ENCODE measurements at regions of chr6 and their contacts with region 1.

Region 1: GRCh38 chr6:24991810-24992467 is 56.2 kb upstream of the RIPOR2 start:
- DNase-seq: peak; percentile 52 to 90 (median 71)
- ATAC-seq: peak; percentile 86
- H3K4me3 ChIP-seq: no peak overlapping the region
- H3K4me3 Mint-ChIP-seq: peak overlapping the region; percentile 46
- H3K27ac ChIP-seq: peak overlapping the region; percentile 31 to 66
- H3K27ac Mint-ChIP-seq: peak overlapping the region; percentile 84
- H3K4me1 ChIP-seq: peaks cover 36% of the 10 kb centered on the region
- H3K4me1 Mint-ChIP-seq: peaks cover 83% of the 10 kb centered on the region
- H3K27me3 ChIP-seq: no peaks in the 10 kb centered on the region
- H3K27me3 Mint-ChIP-seq: no peaks in the 10 kb centered on the region
- CTCF ChIP-seq: peak; percentile 85

Region 2: GRCh38 chr6:24126586-24127192 is 865.2 kb before region 1 on chr6:
- CTCF ChIA-PET with region 1: no interaction called
- POLR2A ChIA-PET with region 1: no interaction called
- intact Hi-C with region 1: no loop called
- DNase-seq: peak in 4 of 14 experiments; percentile 6 to 30 (median 15)
- ATAC-seq: no peak
- H3K4me3 ChIP-seq: no peak overlapping the region
- H3K4me3 Mint-ChIP-seq: no peak overlapping the region
- H3K27ac ChIP-seq: no peak overlapping the region
- H3K27ac Mint-ChIP-seq: no peak overlapping the region
- H3K4me1 ChIP-seq: no peaks in the 10 kb centered on the region
- H3K4me1 Mint-ChIP-seq: no peaks in the 10 kb centered on the region
- H3K27me3 ChIP-seq: peaks cover 5 to 20% of the 10 kb centered on the region in 2 experiments
- H3K27me3 Mint-ChIP-seq: peaks cover 51% of the 10 kb centered on the region
- CTCF ChIP-seq: no peak

Region 3: GRCh38 chr6:24855395-24856245 is 136.3 kb before region 1 on chr6:
- CTCF ChIA-PET with region 1: interaction called, 67 read pairs
- POLR2A ChIA-PET with region 1: interaction called, 58 read pairs
- intact Hi-C with region 1: loop called (anchors 1 kb)
- DNase-seq: peak; percentile 49 to 90 (median 61)
- ATAC-seq: peak; percentile 66
- H3K4me3 ChIP-seq: no peak overlapping the region
- H3K4me3 Mint-ChIP-seq: peak overlapping the region; percentile 17
- H3K27ac ChIP-seq: peak overlapping the region; percentile 35 to 61
- H3K27ac Mint-ChIP-seq: peak overlapping the region; percentile 93
- H3K4me1 ChIP-seq: peaks cover 51% of the 10 kb centered on the region
- H3K4me1 Mint-ChIP-seq: peaks cover 67% of the 10 kb centered on the region
- H3K27me3 ChIP-seq: no peaks in the 10 kb centered on the region
- H3K27me3 Mint-ChIP-seq: no peaks in the 10 kb centered on the region
- CTCF ChIP-seq: peak; percentile 79

Region 4: GRCh38 chr6:24888715-24889370 is 103.1 kb before region 1 on chr6:
- CTCF ChIA-PET with region 1: interaction called, 17 read pairs
- POLR2A ChIA-PET with region 1: interaction called, 5 read pairs
- intact Hi-C with region 1: no loop called
- DNase-seq: no peak
- ATAC-seq: peak; percentile 62
- H3K4me3 ChIP-seq: no peak overlapping the region
- H3K4me3 Mint-ChIP-seq: peak overlapping the region; percentile 8
- H3K27ac ChIP-seq: peak overlapping the region in 1 of 2 donors; percentile 30
- H3K27ac Mint-ChIP-seq: peak overlapping the region; percentile 97
- H3K4me1 ChIP-seq: peaks cover 53% of the 10 kb centered on the region
- H3K4me1 Mint-ChIP-seq: peaks cover 93% of the 10 kb centered on the region
- H3K27me3 ChIP-seq: no peaks in the 10 kb centered on the region
- H3K27me3 Mint-ChIP-seq: no peaks in the 10 kb centered on the region
- CTCF ChIP-seq: no peak

Region 5: DNA sequence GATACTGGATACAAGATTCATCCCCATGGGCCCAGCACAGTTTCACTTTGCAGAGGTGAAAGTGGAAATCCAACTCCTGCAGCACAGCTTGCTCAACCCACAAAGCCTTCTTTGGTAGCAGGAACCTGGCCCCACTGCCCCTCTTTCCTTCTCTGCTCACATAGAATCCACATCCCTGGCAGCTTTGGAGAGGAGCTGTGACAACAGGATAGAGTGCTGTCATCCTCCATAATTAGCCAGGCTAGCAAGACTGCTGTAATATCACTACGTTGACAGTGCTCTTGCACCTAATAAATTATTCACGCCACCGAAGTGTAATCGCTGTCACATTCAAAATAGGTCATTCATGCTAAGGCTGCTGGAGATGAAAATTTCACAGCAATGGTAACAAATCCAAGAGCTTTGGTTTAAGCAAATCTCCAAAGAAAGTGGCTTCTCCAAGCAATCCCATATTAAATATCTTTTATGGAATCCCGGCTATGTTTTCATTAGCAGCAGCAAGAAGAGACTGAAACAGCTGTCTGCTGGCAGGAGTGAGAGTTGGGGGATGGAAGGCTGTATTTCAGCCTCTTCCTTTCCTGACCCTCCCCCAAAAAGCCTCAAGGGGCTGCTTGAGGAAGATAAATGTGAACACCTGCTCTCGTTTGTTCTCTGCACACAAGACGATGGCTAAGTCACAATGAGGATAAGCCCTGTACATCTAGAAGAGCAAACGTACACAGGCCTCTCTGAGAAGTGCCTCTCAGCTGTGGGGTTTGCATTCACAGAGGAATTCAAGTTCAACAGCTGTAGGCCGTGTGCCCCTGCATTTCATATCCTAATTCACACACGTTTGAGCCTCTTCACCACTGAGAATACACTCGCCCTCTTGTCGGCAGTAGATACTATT is 72.7 kb before region 1 on chr6:
- CTCF ChIA-PET with region 1: interaction called, 26 read pairs
- POLR2A ChIA-PET with region 1: interaction called, 95 read pairs
- intact Hi-C with region 1: loop called in 1 of 2 experiments (anchors 5 kb)
- DNase-seq: peak in 1 of 14 experiments; percentile 37
- ATAC-seq: peak; percentile 33
- H3K4me3 ChIP-seq: peak overlapping the region; percentile 17
- H3K4me3 Mint-ChIP-seq: peak overlapping the region; percentile 81
- H3K27ac ChIP-seq: peak overlapping the region; percentile 38 to 73
- H3K27ac Mint-ChIP-seq: peak overlapping the region; percentile 97
- H3K4me1 ChIP-seq: peaks cover 90% of the 10 kb centered on the region
- H3K4me1 Mint-ChIP-seq: peaks cover 93% of the 10 kb centered on the region
- H3K27me3 ChIP-seq: no peaks in the 10 kb centered on the region
- H3K27me3 Mint-ChIP-seq: no peaks in the 10 kb centered on the region
- CTCF ChIP-seq: no peak

Region 6: GRCh38 chr6:24949020-24949569 is 42.8 kb before region 1 on chr6:
- CTCF ChIA-PET with region 1: interaction called, 46 read pairs
- POLR2A ChIA-PET with region 1: interaction called, 208 read pairs
- intact Hi-C with region 1: loop called in 1 of 2 experiments (anchors 2 kb)
- DNase-seq: peak in 12 of 14 experiments; percentile 38 to 89 (median 58)
- ATAC-seq: peak; percentile 45
- H3K4me3 ChIP-seq: peak overlapping the region; percentile 5
- H3K4me3 Mint-ChIP-seq: peak overlapping the region; percentile 50
- H3K27ac ChIP-seq: peak overlapping the region; percentile 56 to 70
- H3K27ac Mint-ChIP-seq: peak overlapping the region; percentile 91
- H3K4me1 ChIP-seq: peaks cover 62% of the 10 kb centered on the region
- H3K4me1 Mint-ChIP-seq: peaks cover 87% of the 10 kb centered on the region
- H3K27me3 ChIP-seq: no peaks in the 10 kb centered on the region
- H3K27me3 Mint-ChIP-seq: no peaks in the 10 kb centered on the region
- CTCF ChIP-seq: no peak

Region 7: DNA sequence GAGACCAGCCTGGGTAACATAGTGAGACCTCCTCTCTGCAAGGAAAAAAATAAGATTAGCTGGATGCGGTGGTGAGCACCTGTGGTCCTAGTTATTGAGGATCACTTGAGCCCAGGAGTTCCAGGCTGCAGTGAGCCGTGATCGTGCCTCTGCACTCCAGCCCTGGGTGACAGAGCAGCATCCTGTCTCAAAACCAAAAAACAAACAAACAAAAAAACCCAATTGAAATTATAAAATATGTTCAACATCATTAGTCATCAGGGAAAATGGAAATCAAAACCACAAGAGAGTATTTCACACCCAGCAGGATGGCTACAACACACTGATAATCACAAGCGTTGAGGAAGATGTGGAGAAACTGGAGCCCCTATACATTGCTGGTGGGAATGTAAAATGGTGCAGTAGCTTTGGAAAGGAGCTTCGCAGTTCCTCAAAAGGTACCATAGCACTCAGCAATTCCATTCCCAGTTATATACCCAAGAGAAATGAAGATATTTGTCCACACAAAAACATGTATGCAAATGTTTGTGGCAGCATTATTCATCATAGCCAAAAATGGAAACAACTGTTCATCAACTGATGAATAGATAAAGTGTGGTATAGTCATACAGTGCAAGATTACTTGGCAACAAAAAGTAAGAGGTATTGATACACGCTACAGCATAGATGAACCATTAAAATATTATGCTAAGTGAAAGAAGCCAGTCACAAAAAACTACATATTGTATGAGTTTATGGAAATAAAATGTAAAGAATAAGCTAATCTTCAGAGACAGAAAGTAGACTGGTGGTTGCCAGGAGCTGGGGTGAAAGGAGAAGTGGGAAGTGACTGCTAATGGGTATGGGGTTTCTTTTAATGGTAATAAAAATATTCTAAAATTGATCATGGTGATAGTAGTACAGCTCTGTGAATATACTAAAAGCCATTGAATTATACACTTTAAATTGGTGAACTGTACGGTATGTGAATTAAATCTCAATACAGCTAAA is 17.5 kb before region 1 on chr6:
- CTCF ChIA-PET with region 1: interaction called, 45 read pairs
- POLR2A ChIA-PET with region 1: interaction called, 12 read pairs
- intact Hi-C with region 1: no loop called
- DNase-seq: peak in 5 of 14 experiments; percentile 29 to 73 (median 55)
- ATAC-seq: peak; percentile 83
- H3K4me3 ChIP-seq: no peak overlapping the region
- H3K4me3 Mint-ChIP-seq: peak overlapping the region; percentile 67
- H3K27ac ChIP-seq: peak overlapping the region; percentile 24 to 25
- H3K27ac Mint-ChIP-seq: peak overlapping the region; percentile 90
- H3K4me1 ChIP-seq: peaks cover 36% of the 10 kb centered on the region
- H3K4me1 Mint-ChIP-seq: peaks cover 80% of the 10 kb centered on the region
- H3K27me3 ChIP-seq: no peaks in the 10 kb centered on the region
- H3K27me3 Mint-ChIP-seq: no peaks in the 10 kb centered on the region
- CTCF ChIP-seq: no peak

Region 8: GRCh38 chr6:25017932-25018567 is 26.1 kb after region 1 on chr6:
- CTCF ChIA-PET with region 1: interaction called, 68 read pairs
- POLR2A ChIA-PET with region 1: interaction called, 23 read pairs
- intact Hi-C with region 1: loop called in 1 of 2 experiments (anchors 1 kb)
- DNase-seq: peak; percentile 68 to 92 (median 79)
- ATAC-seq: peak; percentile 75
- H3K4me3 ChIP-seq: no peak overlapping the region
- H3K4me3 Mint-ChIP-seq: peak overlapping the region; percentile 46
- H3K27ac ChIP-seq: peak overlapping the region; percentile 44 to 50
- H3K27ac Mint-ChIP-seq: peak overlapping the region; percentile 89
- H3K4me1 ChIP-seq: peaks cover 35% of the 10 kb centered on the region
- H3K4me1 Mint-ChIP-seq: peaks cover 44% of the 10 kb centered on the region
- H3K27me3 ChIP-seq: no peaks in the 10 kb centered on the region
- H3K27me3 Mint-ChIP-seq: no peaks in the 10 kb centered on the region
- CTCF ChIP-seq: peak; percentile 87

Region 9: GRCh38 chr6:25297039-25297441 is 305.1 kb after region 1 on chr6:
- CTCF ChIA-PET with region 1: no interaction called
- POLR2A ChIA-PET with region 1: no interaction called
- intact Hi-C with region 1: no loop called
- DNase-seq: no peak
- ATAC-seq: no peak
- H3K4me3 ChIP-seq: no peak overlapping the region
- H3K4me3 Mint-ChIP-seq: no peak overlapping the region
- H3K27ac ChIP-seq: no peak overlapping the region
- H3K27ac Mint-ChIP-seq: no peak overlapping the region
- H3K4me1 ChIP-seq: peaks cover 2% of the 10 kb centered on the region
- H3K4me1 Mint-ChIP-seq: peaks cover 31% of the 10 kb centered on the region
- H3K27me3 ChIP-seq: no peaks in the 10 kb centered on the region
- H3K27me3 Mint-ChIP-seq: no peaks in the 10 kb centered on the region
- CTCF ChIP-seq: no peak

Measured in CD4-positive, alpha-beta T cell (primary cell).